Kidney (tissue), 22 donors: ENCODE measurements at regions of chr7 and their contacts with region 1.

Region 1: DNA sequence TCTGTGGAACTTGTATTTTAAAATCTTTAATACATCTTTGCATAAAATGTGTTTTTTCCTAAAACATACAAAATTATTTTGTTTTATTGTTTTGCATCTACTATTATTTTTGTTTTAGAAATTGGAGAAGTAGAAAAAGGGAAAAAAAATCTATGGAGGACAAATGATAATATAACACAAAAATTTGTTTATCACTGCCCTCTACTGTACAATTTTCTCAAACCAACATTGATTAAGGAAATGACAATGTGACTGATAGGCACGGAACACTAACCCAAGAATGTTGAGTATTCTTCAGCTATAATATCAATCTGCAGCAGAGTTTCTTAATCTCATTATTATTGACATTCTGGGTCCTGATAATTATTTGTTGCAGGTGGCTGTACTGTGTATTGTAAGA is 9.5 kb upstream of the ING3 start:
- DNase-seq: no peak
- H3K4me3 ChIP-seq: no peak overlapping the region
- H3K27ac ChIP-seq: no peak overlapping the region
- H3K4me1 ChIP-seq: no peaks in the 10 kb centered on the region
- H3K27me3 ChIP-seq: no peaks in the 10 kb centered on the region
- CTCF ChIP-seq: peak; percentile 29

Region 2: GRCh38 chr7:120805636-120806388 is 135.3 kb before region 1 on chr7:
- intact Hi-C with region 1: loop called (anchors 10 kb)
- DNase-seq: peak in 4 of 5 donors; percentile 68 to 95 (median 82)
- H3K4me3 ChIP-seq: no peak overlapping the region
- H3K27ac ChIP-seq: no peak overlapping the region
- H3K4me1 ChIP-seq: peaks cover 0 to 12% (median 2%) of the 10 kb centered on the region in 3 donors
- H3K27me3 ChIP-seq: no peaks in the 10 kb centered on the region
- CTCF ChIP-seq: peak; percentile 84